ENCODE measurements at regions of chrX and their contacts with region 1.

Region 1: DNA sequence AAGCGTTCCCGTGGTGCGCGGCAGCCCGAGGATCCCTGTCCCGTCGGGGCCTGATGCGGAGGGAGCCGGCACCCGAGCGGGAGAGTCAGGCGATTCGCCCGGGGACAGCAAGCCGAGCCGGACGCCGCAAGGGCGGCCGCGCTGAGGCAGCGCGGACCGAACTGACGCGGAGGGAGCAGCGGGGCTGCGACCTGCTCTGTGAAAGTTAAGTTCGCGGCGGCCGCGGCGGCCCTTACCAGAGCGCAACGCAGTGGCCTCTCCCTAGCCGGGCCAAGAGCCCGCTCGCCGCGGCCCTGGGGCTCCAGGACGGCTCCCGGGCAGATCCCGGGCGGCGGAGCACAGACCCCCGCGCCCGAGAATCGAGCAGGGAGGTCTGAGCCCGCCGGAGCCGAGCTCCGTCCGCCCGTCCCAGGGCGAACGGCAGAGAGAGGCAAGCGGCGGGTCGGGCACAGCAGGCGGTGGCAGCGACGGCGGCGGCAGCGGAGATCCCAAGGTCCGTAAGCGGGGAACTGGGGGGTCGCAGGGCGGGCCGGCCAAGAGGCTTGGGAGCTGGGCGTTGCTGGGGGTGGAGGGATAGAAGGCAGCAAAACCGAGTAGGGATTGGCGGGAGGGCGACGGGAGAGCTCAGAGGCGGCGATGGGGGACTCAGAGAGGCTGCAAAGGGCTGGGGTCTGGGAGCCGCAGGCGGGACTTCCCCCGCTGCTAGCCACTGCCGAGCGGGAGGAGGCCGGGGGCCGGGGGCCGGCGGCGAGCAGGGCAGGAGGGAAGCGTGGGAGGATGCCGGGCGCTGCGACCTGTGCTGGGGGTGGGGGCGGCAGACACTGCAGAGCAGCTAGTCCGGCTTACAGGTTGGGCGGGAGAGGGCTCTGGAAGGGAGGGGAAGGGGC is 1.0 kb downstream of the GPR50 start:
- DNase-seq: peak in 1 of 3 donors; percentile 46
- ATAC-seq: no peak
- H3K4me3 ChIP-seq: peak overlapping the region; percentile 35
- H3K27ac ChIP-seq: no peak overlapping the region
- H3K4me1 ChIP-seq: no peaks in the 10 kb centered on the region
- H3K27me3 ChIP-seq: no peaks in the 10 kb centered on the region

Region 2: DNA sequence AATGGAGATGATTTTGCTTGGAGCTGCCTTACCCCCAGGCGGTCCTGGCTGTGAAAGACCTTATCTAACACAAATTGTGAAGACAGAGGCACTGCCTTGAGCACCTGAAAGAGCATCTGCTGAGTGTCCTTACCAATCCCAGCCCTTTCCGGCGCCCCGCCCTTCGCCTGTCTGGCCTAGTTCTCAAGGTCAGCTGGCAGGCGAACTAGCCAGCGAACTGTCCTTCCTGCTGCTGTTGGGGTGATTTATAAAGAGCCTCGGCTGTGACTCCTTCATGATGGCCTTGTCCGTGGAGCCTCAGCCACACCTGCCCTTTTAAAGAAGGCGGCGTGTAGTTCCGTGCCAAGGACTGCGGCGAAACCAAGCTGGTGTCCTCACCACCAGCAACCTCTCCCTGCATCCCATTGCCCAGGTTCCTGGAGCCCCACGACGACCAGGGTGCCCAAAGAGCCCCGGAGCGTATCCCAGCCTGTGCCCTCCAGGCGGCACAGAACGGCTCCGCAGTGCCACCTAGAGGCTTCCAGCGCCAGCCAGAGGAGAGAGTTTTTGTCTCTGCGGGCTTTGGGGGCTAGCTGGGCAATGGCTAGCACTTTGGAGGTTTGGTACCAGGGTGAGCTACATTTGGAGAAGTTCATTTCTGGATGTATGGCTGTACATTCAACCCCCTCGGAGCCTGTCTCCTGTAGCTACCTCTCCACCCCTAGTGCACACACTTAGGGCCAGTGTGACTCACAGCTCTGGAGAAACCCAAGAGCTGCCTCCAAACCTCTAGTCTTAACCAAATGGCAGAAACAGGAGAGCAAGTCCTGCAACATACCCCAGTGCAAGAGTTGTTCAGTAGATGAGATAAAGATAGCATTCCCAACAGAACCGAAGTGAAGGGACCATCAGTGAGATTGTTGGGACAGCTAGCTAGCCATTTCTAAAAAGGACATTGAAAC is 182.8 kb after region 1 on chrX:
- intact Hi-C with region 1: loop called in 1 of 4 experiments (anchors 10 kb)
- DNase-seq: peak; percentile 23 to 61 (median 48)
- ATAC-seq: peak; percentile 57 to 69
- H3K4me3 ChIP-seq: no peak overlapping the region
- H3K27ac ChIP-seq: no peak overlapping the region
- H3K4me1 ChIP-seq: no peaks in the 10 kb centered on the region
- H3K27me3 ChIP-seq: no peaks in the 10 kb centered on the region

Measured in right cardiac atrium (tissue), 5 donors.